Activated CD4-positive, alpha-beta T cell treated with anti-CD3 and anti-CD28 coated beads for 36 hours (primary cell): ENCODE measurements at regions of chr14 and their contacts with region 1.

Region 1: GRCh38 chr14:93892923-93893558 is 34.1 kb upstream of the FAM181A start:
- DNase-seq: peak; percentile 84
- ATAC-seq: peak; percentile 60
- H3K4me3 Mint-ChIP-seq: no peak overlapping the region
- H3K27ac Mint-ChIP-seq: no peak overlapping the region
- H3K4me1 Mint-ChIP-seq: no peaks in the 10 kb centered on the region
- H3K27me3 Mint-ChIP-seq: peaks cover 17% of the 10 kb centered on the region

Region 2: DNA sequence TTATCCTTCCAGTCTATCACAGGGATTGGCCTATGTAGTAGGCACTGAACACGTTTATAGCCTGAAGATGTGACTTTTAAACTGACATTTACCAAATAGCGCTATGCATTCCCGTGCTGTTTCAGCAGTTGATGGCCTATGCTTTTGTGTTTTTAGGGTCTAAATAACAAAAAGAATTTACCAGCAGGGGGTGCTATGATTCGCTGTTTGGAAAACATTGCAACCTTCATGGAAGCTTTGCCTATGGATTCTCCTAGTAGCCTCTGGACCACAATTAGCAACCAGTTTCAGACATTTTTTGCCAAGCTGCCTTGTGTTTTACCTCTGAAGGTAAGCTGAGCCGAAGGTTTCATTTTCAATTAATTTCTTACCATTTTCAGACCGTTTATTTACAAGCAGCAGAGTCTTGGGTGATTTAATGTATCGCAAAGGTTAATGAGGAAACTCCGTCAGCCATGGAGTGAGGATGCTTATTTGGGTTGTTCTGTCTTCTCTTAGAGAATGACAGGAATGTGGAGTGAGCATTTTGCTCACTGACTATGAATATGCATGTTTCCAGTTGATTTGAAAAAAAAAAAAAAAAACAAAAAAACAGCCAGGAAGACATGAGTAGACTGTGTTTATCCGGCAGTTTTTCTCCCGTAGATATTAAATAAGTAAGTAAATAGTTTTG is 237.8 kb before region 1 on chr14:
- CTCF ChIA-PET with region 1: interaction called, 5 read pairs
- POLR2A ChIA-PET with region 1: no interaction called
- intact Hi-C with region 1: loop called (anchors 1 to 2 kb)
- DNase-seq: no peak
- ATAC-seq: no peak
- H3K4me3 Mint-ChIP-seq: no peak overlapping the region
- H3K27ac Mint-ChIP-seq: no peak overlapping the region
- H3K4me1 Mint-ChIP-seq: no peaks in the 10 kb centered on the region
- H3K27me3 Mint-ChIP-seq: peaks cover 29% of the 10 kb centered on the region

Region 3: DNA sequence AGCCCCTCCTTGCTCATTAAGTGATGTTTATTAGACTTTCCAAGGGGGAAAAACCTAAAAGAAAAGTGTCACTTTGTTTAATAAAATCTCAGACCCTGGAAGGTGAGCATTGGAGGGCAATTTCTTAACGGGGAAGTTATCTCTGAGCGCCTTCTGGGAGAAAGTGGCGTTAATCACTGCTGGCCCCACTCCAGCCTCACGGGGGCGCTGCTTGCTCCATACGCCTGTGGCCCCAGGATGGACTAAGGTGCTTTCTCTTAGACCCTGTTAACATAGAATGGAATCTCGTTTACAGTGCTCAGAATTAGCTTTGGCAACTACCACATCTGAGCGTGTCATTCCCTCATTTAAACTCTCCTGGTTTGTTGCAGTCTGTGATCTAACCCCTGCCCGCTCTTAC is 88.4 kb before region 1 on chr14:
- CTCF ChIA-PET with region 1: no interaction called
- POLR2A ChIA-PET with region 1: no interaction called
- intact Hi-C with region 1: loop called in 1 of 2 experiments (anchors 5 kb)
- DNase-seq: peak; percentile 35
- ATAC-seq: no peak
- H3K4me3 Mint-ChIP-seq: no peak overlapping the region
- H3K27ac Mint-ChIP-seq: no peak overlapping the region
- H3K4me1 Mint-ChIP-seq: peaks cover 10% of the 10 kb centered on the region
- H3K27me3 Mint-ChIP-seq: peaks cover 6% of the 10 kb centered on the region

Region 4: GRCh38 chr14:94129111-94129757 is 236.2 kb after region 1 on chr14 and contains the start of gene IFI27L2:
- CTCF ChIA-PET with region 1: no interaction called
- POLR2A ChIA-PET with region 1: no interaction called
- intact Hi-C with region 1: no loop called
- DNase-seq: peak; percentile 85
- ATAC-seq: peak; percentile 97
- H3K4me3 Mint-ChIP-seq: peak within 1 kb of the TSS; percentile 78
- H3K27ac Mint-ChIP-seq: peak within 1 kb of the TSS; percentile 37
- H3K4me1 Mint-ChIP-seq: peaks cover 21% of the 10 kb centered on the region
- H3K27me3 Mint-ChIP-seq: peaks cover 4% of the 10 kb centered on the region
- total RNA-seq, gene IFI27L2: 57.3 to 66.9 TPM